Activated CD4-positive, alpha-beta memory T cell treated with anti-CD3 and anti-CD28 coated beads for 36 hours (primary cell): ENCODE measurements at regions of chr14 and their contacts with region 1.

Region 1: GRCh38 chr14:106417224-106418049 is 891.1 kb downstream of the TMEM121 start:
- DNase-seq: peak; percentile 97
- H3K4me3 Mint-ChIP-seq: no peak overlapping the region
- H3K27ac Mint-ChIP-seq: no peak overlapping the region
- H3K4me1 Mint-ChIP-seq: peaks cover 8% of the 10 kb centered on the region
- H3K27me3 Mint-ChIP-seq: peaks cover 4% of the 10 kb centered on the region

Region 2: DNA sequence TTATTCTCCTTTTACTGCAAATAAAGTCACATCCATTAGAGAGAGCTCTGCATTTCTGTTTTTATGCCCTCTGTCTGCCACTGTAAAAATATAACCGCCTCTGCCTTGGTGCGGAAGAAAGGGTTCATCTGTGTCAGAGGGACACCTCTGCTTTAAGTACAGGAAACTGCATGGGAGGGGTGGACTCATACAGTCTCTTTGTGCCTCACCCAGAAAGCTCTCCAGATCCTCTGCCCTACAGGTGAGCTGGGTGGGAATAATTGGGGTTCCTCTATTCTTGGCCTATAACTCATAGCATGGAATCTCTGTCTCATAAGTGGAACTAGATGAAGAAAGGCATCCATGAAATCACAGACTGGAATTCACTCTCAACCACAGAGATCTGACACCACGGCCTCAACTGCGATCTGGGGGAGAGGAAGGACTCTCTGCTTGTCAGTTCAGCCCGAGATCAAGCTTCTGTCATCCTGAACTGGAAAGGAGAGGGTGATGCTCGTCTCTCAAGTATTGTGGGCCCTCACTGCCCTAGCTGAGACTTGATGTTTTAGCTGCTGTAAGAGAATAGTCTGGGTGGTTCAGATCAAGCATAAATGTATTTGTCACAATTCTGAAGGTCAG is 188.8 kb before region 1 on chr14:
- CTCF ChIA-PET with region 1: interaction called, 11 read pairs
- POLR2A ChIA-PET with region 1: no interaction called
- intact Hi-C with region 1: no loop called
- DNase-seq: peak; percentile 53
- H3K4me3 Mint-ChIP-seq: peak overlapping the region; percentile 58
- H3K27ac Mint-ChIP-seq: peak overlapping the region; percentile 72
- H3K4me1 Mint-ChIP-seq: peaks cover 45% of the 10 kb centered on the region
- H3K27me3 Mint-ChIP-seq: no peaks in the 10 kb centered on the region

Region 3: DNA sequence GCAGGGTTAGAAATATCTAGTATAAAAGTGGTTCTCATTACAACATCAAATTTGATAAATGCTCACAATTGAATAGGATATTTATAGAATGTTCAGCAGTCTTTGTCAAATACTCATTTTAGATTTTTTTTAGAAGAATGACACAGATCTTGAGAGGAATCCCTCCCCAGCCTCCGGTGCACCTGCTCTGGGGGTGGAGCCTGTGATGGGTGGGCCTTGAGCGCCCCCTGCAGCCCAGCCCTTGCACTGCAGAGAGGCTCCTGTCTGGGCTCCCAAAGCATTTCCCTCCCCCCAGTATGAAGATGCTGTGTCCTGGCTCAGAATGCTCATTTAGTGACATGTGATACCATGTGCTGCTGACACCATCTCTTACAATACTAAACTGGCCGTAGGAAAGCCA is 98.7 kb before region 1 on chr14:
- CTCF ChIA-PET with region 1: interaction called, 13 read pairs
- POLR2A ChIA-PET with region 1: no interaction called
- intact Hi-C with region 1: no loop called
- DNase-seq: peak; percentile 82
- H3K4me3 Mint-ChIP-seq: no peak overlapping the region
- H3K27ac Mint-ChIP-seq: no peak overlapping the region
- H3K4me1 Mint-ChIP-seq: no peaks in the 10 kb centered on the region
- H3K27me3 Mint-ChIP-seq: peaks cover 6% of the 10 kb centered on the region

Region 4: DNA sequence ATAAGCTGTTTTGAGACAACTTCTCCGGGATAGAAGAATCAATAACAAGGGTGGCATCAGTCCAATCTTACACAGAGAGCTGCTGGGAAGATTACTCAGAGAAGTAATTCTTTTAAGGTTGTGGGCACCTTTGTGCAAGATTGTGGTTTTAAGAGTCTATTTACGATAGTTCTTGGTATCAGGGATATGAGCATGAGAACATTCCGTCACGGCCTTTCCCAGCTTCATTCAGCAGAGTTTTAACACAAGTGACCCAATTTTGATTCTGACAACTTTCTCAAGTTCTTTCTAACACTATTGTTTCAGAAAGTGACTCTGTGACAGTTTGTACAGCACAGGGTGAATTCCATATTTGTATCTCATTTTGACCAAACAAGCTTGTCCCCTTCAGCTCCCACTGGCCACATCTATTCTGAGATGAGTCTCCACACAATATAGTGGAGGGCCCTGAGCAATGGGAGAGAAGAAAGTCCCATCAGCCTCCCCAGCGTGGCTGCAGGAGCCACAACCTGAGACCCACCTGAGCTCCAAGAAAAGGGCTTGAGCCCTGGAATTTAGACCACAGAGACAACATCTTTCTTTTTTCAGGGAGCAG is 21.9 kb before region 1 on chr14:
- CTCF ChIA-PET with region 1: interaction called, 155 read pairs
- POLR2A ChIA-PET with region 1: no interaction called
- intact Hi-C with region 1: loop called (anchors 2 kb)
- DNase-seq: peak; percentile 61
- H3K4me3 Mint-ChIP-seq: peak overlapping the region; percentile 52
- H3K27ac Mint-ChIP-seq: peak overlapping the region; percentile 81
- H3K4me1 Mint-ChIP-seq: peaks cover 44% of the 10 kb centered on the region
- H3K27me3 Mint-ChIP-seq: peaks cover 9% of the 10 kb centered on the region

Region 5: DNA sequence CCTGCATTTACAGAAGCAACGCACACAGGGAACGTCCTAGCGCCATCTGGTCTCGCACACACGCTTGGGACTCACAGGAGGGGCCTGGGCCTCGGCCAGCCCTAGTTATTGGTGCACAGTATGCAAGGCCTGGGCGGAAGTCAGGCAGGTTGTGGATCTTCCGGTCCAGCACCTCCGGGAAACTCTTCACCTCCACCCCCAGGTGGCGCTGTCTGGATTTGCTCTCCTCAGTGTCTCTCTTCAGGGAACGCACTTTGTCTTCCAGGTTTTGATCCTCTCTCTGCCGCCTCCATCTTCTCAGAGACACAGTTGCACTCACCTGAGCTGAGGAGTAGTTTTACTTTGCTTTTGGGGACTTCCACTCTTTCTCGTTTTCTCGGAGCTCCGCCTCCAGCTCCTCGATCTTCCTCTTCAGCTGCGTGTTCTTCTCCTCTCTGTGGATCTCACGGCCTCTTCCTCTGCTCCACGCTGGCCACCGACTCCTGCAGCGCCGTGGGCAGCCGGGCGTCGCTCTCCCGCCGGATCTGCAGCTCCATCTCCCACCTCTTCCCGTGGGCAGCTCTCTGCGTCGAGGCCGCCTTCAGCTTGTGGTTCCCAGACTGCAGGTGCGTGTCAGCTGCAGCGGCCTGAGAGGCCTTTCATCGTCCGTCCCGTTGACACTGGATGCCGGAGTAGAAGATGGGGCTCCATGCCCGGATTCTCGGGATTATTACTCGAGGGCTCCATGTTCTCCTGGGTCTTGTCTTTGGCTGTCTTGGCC is 42.7 kb after region 1 on chr14:
- CTCF ChIA-PET with region 1: interaction called, 10 read pairs
- POLR2A ChIA-PET with region 1: no interaction called
- intact Hi-C with region 1: no loop called
- DNase-seq: peak; percentile 82
- H3K4me3 Mint-ChIP-seq: no peak overlapping the region
- H3K27ac Mint-ChIP-seq: peak overlapping the region; percentile 18
- H3K4me1 Mint-ChIP-seq: peaks cover 5% of the 10 kb centered on the region
- H3K27me3 Mint-ChIP-seq: peaks cover 12% of the 10 kb centered on the region

Region 6: GRCh38 chr14:106518054-106518943 is 100.9 kb after region 1 on chr14:
- CTCF ChIA-PET with region 1: interaction called, 14 read pairs
- POLR2A ChIA-PET with region 1: no interaction called
- intact Hi-C with region 1: no loop called
- DNase-seq: peak; percentile 89
- H3K4me3 Mint-ChIP-seq: no peak overlapping the region
- H3K27ac Mint-ChIP-seq: no peak overlapping the region
- H3K4me1 Mint-ChIP-seq: peaks cover 15% of the 10 kb centered on the region
- H3K27me3 Mint-ChIP-seq: peaks cover 10% of the 10 kb centered on the region

Region 7: DNA sequence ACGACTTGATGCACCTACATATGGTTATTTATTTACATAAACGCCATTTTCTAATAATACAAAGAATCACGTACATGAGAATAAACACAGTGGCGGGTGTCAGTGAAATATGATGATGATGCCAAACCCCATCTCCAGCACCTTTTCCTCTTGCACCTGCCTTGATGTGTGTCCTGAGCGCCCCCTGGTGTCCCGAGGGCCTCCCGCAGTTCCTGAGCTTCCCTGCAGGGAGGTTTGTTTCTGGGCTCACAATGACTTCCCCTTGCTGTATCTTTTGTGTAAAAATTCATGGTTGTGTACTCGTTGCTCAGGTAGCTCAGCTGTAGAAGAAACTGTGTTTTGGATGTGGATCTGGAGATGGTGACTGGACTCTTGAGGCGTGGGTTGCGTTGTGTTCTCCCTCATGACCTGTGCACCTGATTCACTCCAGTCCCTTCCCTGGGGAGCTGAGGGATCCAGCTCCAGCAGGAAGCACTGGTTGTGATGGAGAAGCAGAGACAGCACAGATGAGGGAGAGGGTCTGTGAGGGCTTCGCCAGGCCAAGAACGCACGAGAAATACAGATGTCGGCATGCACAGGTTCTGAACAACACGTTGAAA is 146.7 kb after region 1 on chr14:
- CTCF ChIA-PET with region 1: interaction called, 10 read pairs
- POLR2A ChIA-PET with region 1: no interaction called
- intact Hi-C with region 1: no loop called
- DNase-seq: peak; percentile 76
- H3K4me3 Mint-ChIP-seq: no peak overlapping the region
- H3K27ac Mint-ChIP-seq: no peak overlapping the region
- H3K4me1 Mint-ChIP-seq: no peaks in the 10 kb centered on the region
- H3K27me3 Mint-ChIP-seq: peaks cover 27% of the 10 kb centered on the region